ENCODE measurements at regions of chr1 and their contacts with region 1.

Region 1: GRCh38 chr1:17125756-17126237 is 6.5 kb upstream of the PADI2 start:
- DNase-seq: peak; percentile 93
- ATAC-seq: peak; percentile 93

Region 2: GRCh38 chr1:17045150-17045549 is 80.6 kb before region 1 on chr1:
- intact Hi-C with region 1: no loop called
- DNase-seq: no peak
- ATAC-seq: peak; percentile 66

Region 3: DNA sequence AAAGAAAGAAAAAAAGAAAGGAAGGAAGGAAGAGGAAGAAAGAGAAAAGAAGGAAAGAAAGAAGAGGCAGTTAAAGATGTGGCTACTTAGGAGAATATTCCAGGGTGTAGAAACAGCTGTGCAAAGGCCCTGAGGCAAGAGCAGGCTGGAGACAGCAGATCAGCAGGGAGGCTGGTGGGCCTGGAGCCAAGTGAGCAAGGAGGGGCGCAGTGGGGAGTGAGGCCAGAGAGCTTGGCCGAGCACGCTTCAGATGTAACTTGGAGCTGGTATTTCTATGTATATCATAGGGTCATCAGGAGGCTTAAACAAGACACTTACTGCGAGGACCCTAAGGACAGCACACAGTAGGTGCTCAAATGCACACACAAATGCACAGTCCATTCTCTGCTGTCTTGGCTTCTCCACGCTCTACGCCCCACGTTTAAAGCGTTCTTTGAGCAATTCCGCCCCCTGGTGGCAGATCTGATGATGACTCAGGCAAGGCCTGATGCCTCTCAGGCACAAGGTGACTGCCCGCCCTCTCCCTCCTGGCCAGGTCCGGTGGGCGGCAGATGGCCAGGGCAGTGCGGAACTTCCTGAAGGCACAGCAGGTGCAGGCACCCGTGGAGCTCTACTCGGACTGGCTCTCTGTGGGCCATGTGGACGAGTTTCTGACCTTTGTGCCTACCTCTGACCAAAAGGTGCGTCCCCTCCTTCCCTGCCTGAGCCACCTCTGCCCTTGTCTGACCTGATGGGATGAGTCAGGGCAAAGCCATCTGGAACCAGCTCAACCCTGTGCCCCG is 111.2 kb after region 1 on chr1:
- intact Hi-C with region 1: loop called (anchors 2 kb)
- DNase-seq: peak; percentile 90
- ATAC-seq: peak; percentile 88

Region 4: DNA sequence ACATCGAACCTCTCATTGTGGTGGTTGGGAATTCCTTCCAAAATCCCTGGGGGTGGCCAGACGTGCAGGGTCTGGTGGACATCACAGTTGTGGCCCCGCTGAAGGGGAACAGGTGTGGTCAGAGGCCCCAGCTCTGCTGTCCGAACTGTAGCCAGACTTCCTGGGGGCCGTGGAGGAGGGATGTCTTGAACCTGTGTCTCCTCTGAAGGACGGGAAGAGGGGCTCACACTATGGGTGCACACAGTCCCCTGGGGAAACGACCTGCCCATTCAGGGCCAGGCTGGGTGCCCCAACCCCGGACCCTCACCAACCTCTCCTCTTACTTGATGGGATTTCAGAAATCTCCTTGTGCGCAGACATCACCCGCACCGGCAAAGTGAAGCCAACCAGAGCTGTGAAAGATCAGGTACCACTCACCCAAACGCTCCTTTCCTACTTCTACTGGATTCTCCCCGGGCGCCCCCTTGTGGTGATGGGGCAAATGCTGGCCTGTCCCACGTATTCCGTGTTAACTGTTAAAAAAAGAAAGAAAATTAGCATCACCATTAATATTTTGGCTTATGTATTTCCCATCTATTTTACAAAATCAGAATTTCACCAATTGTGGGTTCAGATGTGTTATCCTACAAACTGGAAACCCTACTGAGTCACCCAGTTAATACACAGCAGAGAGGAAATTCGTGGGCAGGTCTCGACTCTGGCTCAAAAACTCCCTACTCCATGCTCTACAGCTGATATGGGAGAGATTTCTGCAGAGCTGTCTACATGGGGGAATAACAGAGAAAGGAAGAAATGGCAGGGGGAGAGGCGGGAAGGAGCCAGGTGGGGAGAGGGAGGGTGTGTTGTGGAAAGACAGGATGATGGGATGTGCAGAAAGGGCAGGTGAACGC is 210.3 kb after region 1 on chr1:
- intact Hi-C with region 1: loop called (anchors 5 kb)
- DNase-seq: peak; percentile 68
- ATAC-seq: no peak

Region 5: DNA sequence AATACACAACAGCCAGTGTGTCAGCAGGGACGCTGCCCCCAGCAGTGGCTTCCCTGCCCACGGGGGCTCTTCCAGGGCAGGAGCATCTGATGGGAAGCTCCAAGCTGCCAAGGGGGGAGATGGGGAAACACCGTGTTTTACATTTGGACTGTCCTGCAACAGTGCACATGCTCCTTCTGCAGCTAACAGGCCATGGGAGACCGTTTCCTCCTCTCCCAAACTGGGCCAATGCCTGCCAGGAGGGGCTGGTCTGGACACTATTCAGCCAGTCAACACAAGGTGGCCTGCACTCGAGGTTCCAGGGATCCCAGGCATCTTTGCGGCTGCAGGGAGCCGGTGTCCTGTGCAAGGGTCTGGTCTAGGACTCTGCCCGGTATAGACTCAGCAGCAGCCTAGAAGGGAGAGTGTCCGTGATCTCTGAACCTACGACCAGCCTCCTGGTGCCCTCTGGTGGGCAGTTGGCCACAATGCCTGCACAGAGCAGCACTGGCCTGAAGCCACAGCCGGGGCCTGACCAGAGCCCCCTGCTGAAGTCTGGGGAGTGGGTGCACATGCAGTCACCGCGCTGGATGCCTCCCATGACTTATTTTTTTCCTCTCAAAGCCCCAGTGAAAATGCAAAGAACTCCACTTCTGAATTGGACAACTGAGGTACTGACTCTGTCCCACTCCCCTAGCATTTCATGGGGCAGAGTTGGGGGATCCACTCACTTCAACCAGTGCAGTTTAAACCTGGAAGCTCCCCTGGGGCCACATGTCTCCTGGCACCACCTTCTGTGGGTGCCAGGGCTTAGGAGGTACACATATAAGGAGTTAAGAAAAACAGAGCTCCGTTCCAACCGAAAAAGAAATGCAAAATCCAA is 280.3 kb after region 1 on chr1:
- intact Hi-C with region 1: loop called (anchors 5 kb)
- DNase-seq: peak; percentile 74
- ATAC-seq: peak; percentile 88

Region 6: GRCh38 chr1:17648457-17649145 is 522.8 kb after region 1 on chr1:
- intact Hi-C with region 1: no loop called
- DNase-seq: no peak
- ATAC-seq: no peak